Activated CD4-positive, alpha-beta memory T cell treated with anti-CD3 and anti-CD28 coated beads for 36 hours (primary cell): ENCODE measurements at regions of chr6 and their contacts with region 1.

Region 1: DNA sequence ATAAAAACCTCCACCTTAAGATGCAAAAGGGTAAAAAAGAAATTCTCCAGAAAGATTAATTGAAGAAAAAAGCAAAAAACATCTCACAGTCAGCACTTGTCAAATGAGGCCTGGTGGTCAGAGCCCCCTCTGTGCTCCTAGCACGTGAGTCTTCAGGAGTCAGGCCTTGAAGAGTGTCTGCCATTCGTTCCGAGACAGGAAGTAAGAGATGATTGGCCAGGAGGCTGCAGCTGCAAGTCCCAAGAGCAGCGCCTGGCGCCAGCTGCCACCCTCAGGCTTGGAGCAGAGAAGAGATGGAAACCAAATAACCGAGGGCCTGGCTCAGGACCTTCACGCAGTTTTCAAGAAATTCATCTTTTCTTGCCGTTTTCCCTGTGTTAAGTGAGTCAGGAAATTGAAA is 65.0 kb downstream of the FAM120B start:
- DNase-seq: no peak
- H3K4me3 Mint-ChIP-seq: no peak overlapping the region
- H3K27ac Mint-ChIP-seq: peak overlapping the region; percentile 79
- H3K4me1 Mint-ChIP-seq: peaks cover 19% of the 10 kb centered on the region
- H3K27me3 Mint-ChIP-seq: no peaks in the 10 kb centered on the region

Region 2: GRCh38 chr6:170347091-170347490 is 24.5 kb before region 1 on chr6:
- CTCF ChIA-PET with region 1: no interaction called
- POLR2A ChIA-PET with region 1: no interaction called
- intact Hi-C with region 1: loop called (anchors 2 kb)
- DNase-seq: peak; percentile 31
- H3K4me3 Mint-ChIP-seq: no peak overlapping the region
- H3K27ac Mint-ChIP-seq: peak overlapping the region; percentile 77
- H3K4me1 Mint-ChIP-seq: peaks cover 31% of the 10 kb centered on the region
- H3K27me3 Mint-ChIP-seq: no peaks in the 10 kb centered on the region

Region 3: DNA sequence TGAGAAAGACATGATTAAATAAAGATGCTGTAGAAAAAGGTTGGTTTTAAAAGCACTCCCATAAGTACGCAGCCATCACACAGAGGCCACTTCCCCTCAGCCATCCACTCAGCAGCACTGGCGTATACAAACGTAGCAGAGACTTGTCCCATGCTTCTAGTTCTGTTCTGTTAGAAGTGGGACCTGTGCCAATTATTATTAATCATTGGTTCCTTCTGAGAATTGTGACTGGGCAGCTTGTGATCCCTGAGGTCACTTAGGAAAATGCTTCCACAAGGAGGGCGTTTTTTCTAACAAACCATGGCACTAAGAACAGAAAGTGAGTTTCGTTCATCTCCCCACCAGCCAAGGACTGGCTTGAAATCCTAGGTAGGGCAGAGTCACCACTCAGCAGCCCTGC is 11.1 kb before region 1 on chr6:
- CTCF ChIA-PET with region 1: no interaction called
- POLR2A ChIA-PET with region 1: no interaction called
- intact Hi-C with region 1: no loop called
- DNase-seq: no peak
- H3K4me3 Mint-ChIP-seq: no peak overlapping the region
- H3K27ac Mint-ChIP-seq: no peak overlapping the region
- H3K4me1 Mint-ChIP-seq: no peaks in the 10 kb centered on the region
- H3K27me3 Mint-ChIP-seq: no peaks in the 10 kb centered on the region

Region 4: GRCh38 chr6:170416303-170416702 is 44.7 kb after region 1 on chr6:
- CTCF ChIA-PET with region 1: no interaction called
- POLR2A ChIA-PET with region 1: no interaction called
- intact Hi-C with region 1: no loop called
- DNase-seq: no peak
- H3K4me3 Mint-ChIP-seq: no peak overlapping the region
- H3K27ac Mint-ChIP-seq: no peak overlapping the region
- H3K4me1 Mint-ChIP-seq: no peaks in the 10 kb centered on the region
- H3K27me3 Mint-ChIP-seq: peaks cover 18% of the 10 kb centered on the region